GM12878 (cell line): ENCODE measurements at regions of chr2 and their contacts with region 1.

Region 1: GRCh38 chr2:152466980-152467676 is 132.2 kb downstream of the FMNL2 start:
- DNase-seq: peak; percentile 74
- ATAC-seq: peak; percentile 95
- H3K4me3 ChIP-seq: peak overlapping the region; percentile 33; the same call in 1 of the 2 replicates
- H3K27ac ChIP-seq: peak overlapping the region; percentile 62
- H3K4me1 ChIP-seq: peaks cover 23% of the 10 kb centered on the region
- H3K27me3 ChIP-seq: no peaks in the 10 kb centered on the region
- CTCF ChIP-seq: no peak
- EP300 ChIP-seq: peak in 1 of 2 experiments; percentile 91; a peak in 2 of 4 replicates
- POLR2A ChIP-seq: no peak
- RAD21 ChIP-seq: no peak

Region 2: DNA sequence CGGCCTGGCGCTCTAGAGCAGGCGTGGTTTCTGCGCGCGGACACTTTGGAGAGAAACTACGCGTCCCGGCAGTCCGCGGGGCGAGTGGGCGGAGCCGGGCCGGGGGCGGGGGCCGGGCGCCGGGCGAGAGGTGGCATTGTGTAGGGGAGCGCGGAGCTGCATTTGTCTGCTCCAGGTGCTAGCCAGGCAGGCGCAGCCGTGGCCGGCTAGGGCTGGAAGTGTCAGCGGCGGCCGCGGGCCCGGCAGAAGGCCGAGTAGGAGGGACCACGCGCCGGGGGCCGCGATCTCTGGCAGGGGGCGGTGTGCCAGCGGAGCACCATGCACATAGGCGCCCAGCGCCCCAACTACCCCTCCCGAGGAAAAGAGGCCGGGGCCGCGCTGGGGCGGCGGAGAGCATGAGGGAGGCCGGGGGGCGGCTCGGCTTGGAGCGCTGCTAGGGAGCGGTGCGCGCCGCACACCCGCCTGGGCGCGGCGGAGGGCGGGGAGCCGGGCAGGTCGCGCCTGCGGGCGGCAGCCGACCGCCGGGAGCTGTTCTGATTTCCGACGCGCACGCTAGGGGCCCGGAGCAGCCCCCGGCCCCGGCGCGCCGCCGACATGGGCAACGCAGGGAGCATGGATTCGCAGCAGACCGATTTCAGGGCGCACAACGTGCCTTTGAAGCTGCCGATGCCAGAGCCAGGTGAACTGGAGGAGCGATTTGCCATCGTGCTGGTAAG is 132.0 kb before region 1 on chr2 and contains the start of gene FMNL2:
- CTCF ChIA-PET with region 1: interaction called, 13 read pairs
- POLR2A ChIA-PET with region 1: no interaction called
- RAD21 ChIA-PET with region 1: interaction called, 3 read pairs
- SMC1A ChIA-PET with region 1: interaction called, 4 read pairs
- in situ Hi-C with region 1: no loop called
- intact Hi-C with region 1: loop called (anchors 5 kb)
- DNase-seq: peak; percentile 24
- ATAC-seq: peak; percentile 90
- H3K4me3 ChIP-seq: peak within 1 kb of the TSS; percentile 76
- H3K27ac ChIP-seq: peak within 1 kb of the TSS; percentile 35; the same call in 1 of the 2 replicates
- H3K4me1 ChIP-seq: no peaks in the 10 kb centered on the region
- H3K27me3 ChIP-seq: no peaks in the 10 kb centered on the region
- CTCF ChIP-seq: 0 out of 6 replicates have a peak, but pooled peaks of 1 of the 3 experiments have one; percentile 5
- EP300 ChIP-seq: no peak
- POLR2A ChIP-seq: 0 out of 2 replicates have a peak, but pooled peaks have one; percentile 67
- RAD21 ChIP-seq: no peak
- polyA plus RNA-seq, gene FMNL2: 0.13 to 0.19 TPM

Region 3: GRCh38 chr2:152477347-152478092 is 10.4 kb after region 1 on chr2:
- CTCF ChIA-PET with region 1: no interaction called
- POLR2A ChIA-PET with region 1: interaction called, 3 read pairs
- RAD21 ChIA-PET with region 1: interaction called, 3 read pairs
- SMC1A ChIA-PET with region 1: interaction called, 10 read pairs
- in situ Hi-C with region 1: no loop called
- intact Hi-C with region 1: no loop called
- DNase-seq: no peak
- ATAC-seq: no peak
- H3K4me3 ChIP-seq: no peak overlapping the region
- H3K27ac ChIP-seq: no peak overlapping the region
- H3K4me1 ChIP-seq: no peaks in the 10 kb centered on the region
- H3K27me3 ChIP-seq: no peaks in the 10 kb centered on the region
- CTCF ChIP-seq: no peak
- EP300 ChIP-seq: no peak
- POLR2A ChIP-seq: no peak
- RAD21 ChIP-seq: no peak

Region 4: DNA sequence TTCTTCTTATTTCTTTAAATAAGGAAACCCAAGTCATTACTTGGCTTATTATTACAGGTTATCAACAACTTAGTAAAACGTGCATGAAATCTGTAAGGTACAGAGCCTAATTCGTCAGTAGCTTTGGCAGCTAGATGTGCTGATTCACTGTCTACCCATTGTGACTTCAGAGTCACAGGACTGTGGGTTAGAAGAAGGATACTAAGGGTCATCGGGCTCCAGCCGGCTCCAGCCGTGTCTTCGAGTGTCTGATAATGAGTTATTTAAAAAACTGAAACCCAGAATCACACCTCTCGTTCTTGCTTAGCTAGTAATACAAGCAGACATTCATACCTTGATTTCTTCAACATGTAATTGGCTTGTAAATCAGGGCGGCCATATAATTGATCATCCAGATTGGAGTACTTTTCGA is 38.4 kb after region 1 on chr2:
- CTCF ChIA-PET with region 1: interaction called, 4 read pairs
- POLR2A ChIA-PET with region 1: interaction called, 3 read pairs
- RAD21 ChIA-PET with region 1: interaction called, 12 read pairs
- SMC1A ChIA-PET with region 1: interaction called, 98 read pairs
- in situ Hi-C with region 1: no loop called
- intact Hi-C with region 1: no loop called
- DNase-seq: peak; percentile 35
- ATAC-seq: peak; percentile 89
- H3K4me3 ChIP-seq: no peak overlapping the region
- H3K27ac ChIP-seq: peak overlapping the region; percentile 29; the same call in 1 of the 2 replicates
- H3K4me1 ChIP-seq: peaks cover 11% of the 10 kb centered on the region; the same call in 1 of the 2 replicates
- H3K27me3 ChIP-seq: no peaks in the 10 kb centered on the region; a peak in 1 of 4 replicates
- CTCF ChIP-seq: no peak
- EP300 ChIP-seq: peak in 1 of 2 experiments; percentile 46; a peak in 1 of 4 replicates
- POLR2A ChIP-seq: no peak
- RAD21 ChIP-seq: no peak

Region 5: GRCh38 chr2:152573168-152573567 is 106.0 kb after region 1 on chr2:
- CTCF ChIA-PET with region 1: interaction called, 6 read pairs
- POLR2A ChIA-PET with region 1: no interaction called
- RAD21 ChIA-PET with region 1: interaction called, 6 read pairs
- SMC1A ChIA-PET with region 1: interaction called, 12 read pairs
- in situ Hi-C with region 1: no loop called
- intact Hi-C with region 1: no loop called
- DNase-seq: peak; percentile 70
- ATAC-seq: peak; percentile 96
- H3K4me3 ChIP-seq: no peak overlapping the region
- H3K27ac ChIP-seq: no peak overlapping the region
- H3K4me1 ChIP-seq: peaks cover 5% of the 10 kb centered on the region; the same call in 1 of the 2 replicates
- H3K27me3 ChIP-seq: no peaks in the 10 kb centered on the region
- CTCF ChIP-seq: no peak
- EP300 ChIP-seq: peak; percentile 65 to 68; a peak in 3 of 4 replicates
- POLR2A ChIP-seq: no peak
- RAD21 ChIP-seq: no peak